SK-N-SH (cell line): ENCODE measurements at regions of chr22 and their contacts with region 1.

Region 1: GRCh38 chr22:39532215-39533071 is at the start of gene RPS19BP1:
- DNase-seq: peak; percentile 86
- H3K4me3 ChIP-seq: peak within 1 kb of the TSS; percentile 72
- H3K27ac ChIP-seq: peak within 1 kb of the TSS; percentile 66 to 76; a peak in 3 of 4 replicates
- H3K4me1 ChIP-seq: peaks cover 4 to 24% of the 10 kb centered on the region in 2 experiments; a peak in 2 of 4 replicates
- H3K27me3 ChIP-seq: no peaks in the 10 kb centered on the region
- CTCF ChIP-seq: no peak
- EP300 ChIP-seq: no peak
- RAD21 ChIP-seq: no peak
- polyA plus RNA-seq, gene RPS19BP1: 77.3 and 97.2 TPM in 2 replicates

Region 2: DNA sequence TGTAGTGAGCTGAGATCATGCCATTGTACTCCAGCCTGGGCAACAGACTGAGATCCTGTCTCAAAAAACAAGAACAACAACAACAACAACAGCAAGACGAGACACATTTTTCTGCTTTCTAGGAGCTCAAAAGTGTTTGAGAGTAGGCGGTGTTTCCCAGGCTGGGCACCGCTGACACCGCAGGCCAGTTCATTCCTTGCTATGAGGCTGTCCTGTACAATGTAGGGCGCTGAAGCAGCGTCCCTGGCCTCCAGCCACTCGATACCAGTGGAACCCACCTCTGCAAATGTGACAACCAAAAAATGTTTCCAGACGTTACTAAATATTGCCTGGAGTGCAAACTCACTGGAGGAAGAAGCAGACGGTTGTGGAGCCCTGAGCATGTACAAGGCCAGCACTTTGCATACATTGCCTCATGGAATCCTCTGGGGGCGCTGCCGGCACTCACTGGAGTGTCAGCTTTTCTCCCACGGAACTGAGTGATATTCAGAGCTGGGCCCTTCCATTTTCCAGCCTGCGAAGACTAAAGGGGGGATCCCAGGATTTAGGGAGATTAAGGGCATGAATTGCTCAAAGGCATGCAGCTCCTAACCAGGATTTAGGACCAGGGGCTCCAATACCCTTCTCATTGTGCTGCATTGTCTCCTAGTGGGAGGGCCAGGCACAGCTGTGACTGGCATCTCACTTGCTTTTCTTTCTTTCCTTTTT is 36.2 kb before region 1 on chr22:
- CTCF ChIA-PET with region 1: interaction called, 36 read pairs
- POLR2A ChIA-PET with region 1: no interaction called
- DNase-seq: peak; percentile 50
- H3K4me3 ChIP-seq: no peak overlapping the region
- H3K27ac ChIP-seq: no peak overlapping the region; a peak in 1 of 4 replicates
- H3K4me1 ChIP-seq: peaks cover 0 to 19% of the 10 kb centered on the region in 2 experiments; a peak in 2 of 4 replicates
- H3K27me3 ChIP-seq: no peaks in the 10 kb centered on the region
- CTCF ChIP-seq: peak; percentile 59
- EP300 ChIP-seq: no peak
- RAD21 ChIP-seq: peak; percentile 48

Region 3: DNA sequence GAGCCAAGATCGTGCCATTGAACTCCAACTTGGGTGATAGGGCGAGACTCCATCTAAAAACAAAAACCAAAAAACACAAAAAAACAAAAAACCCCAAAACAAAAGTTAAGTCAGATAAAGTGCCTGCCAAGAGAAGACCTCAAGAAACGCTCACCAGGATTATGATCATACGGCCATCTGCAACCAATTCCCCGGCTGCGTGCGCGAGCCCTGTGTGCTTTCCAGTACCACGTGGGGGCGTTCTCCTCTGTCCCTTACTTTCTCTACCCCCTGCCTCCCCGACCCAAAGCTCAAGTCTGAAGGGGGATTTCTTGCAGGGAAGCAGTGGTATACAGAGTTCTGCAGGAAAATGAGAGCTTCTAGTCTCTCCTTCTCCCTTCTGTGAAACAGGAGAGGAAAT is 10.7 kb after region 1 on chr22:
- CTCF ChIA-PET with region 1: interaction called, 13 read pairs
- POLR2A ChIA-PET with region 1: interaction called, 4 read pairs
- DNase-seq: peak; percentile 72
- H3K4me3 ChIP-seq: no peak overlapping the region; a peak in 1 of 4 replicates
- H3K27ac ChIP-seq: no peak overlapping the region
- H3K4me1 ChIP-seq: no peaks in the 10 kb centered on the region; a peak in 1 of 4 replicates
- H3K27me3 ChIP-seq: no peaks in the 10 kb centered on the region
- CTCF ChIP-seq: peak; percentile 54
- EP300 ChIP-seq: no peak
- RAD21 ChIP-seq: peak; percentile 64

Region 4: DNA sequence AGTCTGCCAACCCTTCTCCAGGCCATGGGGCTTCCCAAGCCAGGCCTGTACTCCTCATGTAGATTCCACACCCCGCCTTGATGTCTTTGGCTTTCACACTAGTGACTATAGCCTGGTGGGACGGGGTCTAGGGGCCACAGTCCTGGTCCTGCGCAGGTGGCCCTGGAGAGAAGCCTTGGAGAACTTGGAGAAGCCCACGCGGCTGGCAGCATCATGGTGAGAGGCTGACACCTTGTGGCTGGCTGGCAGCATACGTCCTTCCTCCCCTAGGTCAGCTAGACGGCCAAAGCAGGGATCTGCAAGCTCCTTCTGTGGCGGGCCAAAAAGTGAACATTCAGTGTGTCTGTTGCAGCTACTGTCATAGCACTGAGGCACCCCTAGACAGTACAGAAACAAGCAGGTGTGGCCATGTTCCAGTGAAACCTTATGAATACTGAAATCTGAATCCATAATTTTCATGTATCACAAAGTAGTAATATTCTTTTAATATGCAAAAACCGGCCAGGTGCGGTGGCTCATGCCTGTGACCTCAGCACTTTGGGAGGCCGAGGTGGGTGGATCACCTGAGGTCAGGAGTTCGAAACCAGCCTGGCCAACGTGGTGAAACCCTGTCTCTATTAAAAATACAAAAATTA is 504.3 kb after region 1 on chr22:
- CTCF ChIA-PET with region 1: interaction called, 62 read pairs
- POLR2A ChIA-PET with region 1: interaction called, 7 read pairs
- DNase-seq: peak; percentile 70
- H3K4me3 ChIP-seq: peak overlapping the region in 1 of 2 experiments; percentile 26; a peak in 1 of 4 replicates
- H3K27ac ChIP-seq: no peak overlapping the region
- H3K4me1 ChIP-seq: peaks cover 4 to 6% of the 10 kb centered on the region in 2 experiments; a peak in 2 of 4 replicates
- H3K27me3 ChIP-seq: no peaks in the 10 kb centered on the region
- CTCF ChIP-seq: peak; percentile 65
- EP300 ChIP-seq: no peak
- RAD21 ChIP-seq: peak; percentile 88

Region 5: DNA sequence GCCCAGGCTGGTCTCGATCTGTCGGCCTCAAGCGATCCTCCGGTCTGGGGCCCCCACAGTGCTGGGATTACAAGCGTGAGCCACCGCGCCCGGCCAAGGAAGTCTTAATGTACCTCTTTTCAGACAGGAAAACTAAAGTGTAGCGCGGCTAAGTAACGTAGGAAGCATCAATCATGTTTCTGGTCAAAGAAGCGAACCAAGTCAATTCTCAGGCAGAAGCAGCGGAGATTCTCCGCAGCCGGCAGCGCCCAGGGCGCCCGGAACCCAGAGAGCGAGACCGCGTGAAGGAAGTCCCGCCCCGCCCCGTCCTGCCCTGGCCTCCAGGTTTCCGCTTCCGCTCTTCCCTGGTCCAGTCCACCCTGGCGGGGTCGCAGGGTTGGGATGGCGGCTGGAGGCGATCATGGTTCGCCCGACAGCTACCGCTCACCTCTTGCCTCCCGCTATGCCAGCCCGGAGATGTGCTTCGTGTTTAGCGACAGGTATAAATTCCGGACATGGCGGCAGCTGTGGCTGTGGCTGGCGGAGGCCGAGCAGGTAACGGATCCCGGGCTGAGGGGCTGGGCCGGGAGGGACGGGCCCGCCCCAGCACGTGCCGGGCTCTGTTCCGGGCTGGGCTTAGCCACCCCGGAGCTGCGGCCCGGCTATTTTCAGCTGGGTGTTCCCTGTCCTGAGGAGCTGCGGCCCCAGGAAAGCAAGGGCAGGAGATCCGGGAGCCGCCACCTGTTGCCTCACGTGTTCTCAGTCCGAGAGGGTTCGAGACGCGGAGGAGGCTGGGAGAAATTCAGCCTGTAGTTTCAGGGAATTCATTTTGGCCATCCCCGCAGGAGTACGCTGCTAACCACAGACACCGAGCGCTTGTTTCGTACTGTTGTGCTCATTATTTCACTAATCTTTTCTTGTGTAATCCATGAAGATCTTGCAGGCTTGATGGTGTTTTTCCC is 814.0 kb after region 1 on chr22 and contains the start of gene ADSL:
- CTCF ChIA-PET with region 1: interaction called, 12 read pairs
- POLR2A ChIA-PET with region 1: no interaction called
- DNase-seq: peak; percentile 89
- H3K4me3 ChIP-seq: peak within 1 kb of the TSS; percentile 67 to 71
- H3K27ac ChIP-seq: peak within 1 kb of the TSS; percentile 80 to 90
- H3K4me1 ChIP-seq: peaks cover 0 to 5% of the 10 kb centered on the region in 2 experiments; a peak in 3 of 4 replicates
- H3K27me3 ChIP-seq: no peaks in the 10 kb centered on the region
- CTCF ChIP-seq: no peak
- EP300 ChIP-seq: no peak
- RAD21 ChIP-seq: no peak
- polyA plus RNA-seq, gene ADSL: 79.7 and 99.1 TPM in 2 replicates